ENCODE measurements at regions of chr19 and their contacts with region 1.

Region 1: DNA sequence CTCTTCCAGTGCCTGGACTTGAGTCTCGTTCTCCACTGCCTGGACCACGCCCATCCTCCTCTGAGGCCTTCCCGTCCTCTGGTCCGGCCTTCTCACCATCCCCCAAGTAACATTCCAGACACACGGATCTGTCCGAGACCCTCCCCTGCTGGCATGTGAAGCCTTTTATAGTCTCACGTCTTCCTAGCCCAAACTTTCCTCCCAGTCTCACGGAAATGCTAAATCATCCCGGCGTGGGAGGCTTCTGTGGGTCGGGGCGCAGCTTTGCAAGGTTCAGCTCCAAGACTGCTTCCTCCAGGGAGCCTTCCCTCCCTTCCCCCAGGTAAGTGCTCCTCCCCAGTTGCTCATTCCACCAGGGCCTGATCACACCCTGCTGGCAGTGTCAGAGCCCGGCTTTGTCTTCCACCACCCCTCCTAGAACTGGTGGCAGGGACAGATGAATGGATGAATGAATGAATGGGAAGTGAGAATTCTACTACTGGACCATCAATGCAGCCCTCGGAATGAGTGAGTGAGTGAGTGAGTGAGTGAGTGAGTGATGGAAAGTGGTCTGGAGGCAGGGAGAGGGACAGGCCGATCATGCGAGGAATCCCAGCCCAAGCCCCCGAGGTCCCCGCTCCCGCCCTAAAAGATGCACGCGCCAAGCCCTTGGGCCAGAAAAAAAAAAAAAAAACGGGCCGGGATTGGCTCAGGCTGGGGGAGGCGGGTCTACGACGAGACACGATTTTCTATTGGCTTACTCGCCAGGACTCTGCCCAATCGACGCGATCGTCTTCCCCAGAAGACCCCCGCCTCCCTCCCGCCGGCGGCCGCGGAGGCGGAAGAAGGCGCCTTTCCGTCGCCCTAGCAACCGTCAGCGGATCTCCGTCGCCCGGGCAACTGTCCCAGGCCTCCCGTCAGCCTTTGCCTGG is 9.3 kb downstream of the EPHX3 start:
- DNase-seq: peak; percentile 69
- ATAC-seq: peak; percentile 99
- H3K4me3 Mint-ChIP-seq: peak overlapping the region; percentile 89
- H3K27ac Mint-ChIP-seq: no peak overlapping the region
- H3K4me1 Mint-ChIP-seq: peaks cover 16% of the 10 kb centered on the region
- H3K27me3 Mint-ChIP-seq: peaks cover 9% of the 10 kb centered on the region
- CTCF ChIP-seq: no peak

Region 2: GRCh38 chr19:15125232-15126067 is 97.5 kb before region 1 on chr19:
- CTCF ChIA-PET with region 1: no interaction called
- POLR2A ChIA-PET with region 1: no interaction called
- intact Hi-C with region 1: loop called (anchors 1 kb)
- DNase-seq: peak; percentile 96
- ATAC-seq: peak; percentile 88
- H3K4me3 Mint-ChIP-seq: peak overlapping the region; percentile 95
- H3K27ac Mint-ChIP-seq: peak overlapping the region; percentile 91
- H3K4me1 Mint-ChIP-seq: peaks cover 17% of the 10 kb centered on the region
- H3K27me3 Mint-ChIP-seq: peaks cover 4% of the 10 kb centered on the region
- CTCF ChIP-seq: no peak

Region 3: GRCh38 chr19:15136246-15136954 is 86.6 kb before region 1 on chr19:
- CTCF ChIA-PET with region 1: no interaction called
- POLR2A ChIA-PET with region 1: no interaction called
- intact Hi-C with region 1: no loop called
- DNase-seq: no peak
- ATAC-seq: no peak
- H3K4me3 Mint-ChIP-seq: no peak overlapping the region
- H3K27ac Mint-ChIP-seq: no peak overlapping the region
- H3K4me1 Mint-ChIP-seq: no peaks in the 10 kb centered on the region
- H3K27me3 Mint-ChIP-seq: peaks cover 18% of the 10 kb centered on the region
- CTCF ChIP-seq: no peak

Region 4: DNA sequence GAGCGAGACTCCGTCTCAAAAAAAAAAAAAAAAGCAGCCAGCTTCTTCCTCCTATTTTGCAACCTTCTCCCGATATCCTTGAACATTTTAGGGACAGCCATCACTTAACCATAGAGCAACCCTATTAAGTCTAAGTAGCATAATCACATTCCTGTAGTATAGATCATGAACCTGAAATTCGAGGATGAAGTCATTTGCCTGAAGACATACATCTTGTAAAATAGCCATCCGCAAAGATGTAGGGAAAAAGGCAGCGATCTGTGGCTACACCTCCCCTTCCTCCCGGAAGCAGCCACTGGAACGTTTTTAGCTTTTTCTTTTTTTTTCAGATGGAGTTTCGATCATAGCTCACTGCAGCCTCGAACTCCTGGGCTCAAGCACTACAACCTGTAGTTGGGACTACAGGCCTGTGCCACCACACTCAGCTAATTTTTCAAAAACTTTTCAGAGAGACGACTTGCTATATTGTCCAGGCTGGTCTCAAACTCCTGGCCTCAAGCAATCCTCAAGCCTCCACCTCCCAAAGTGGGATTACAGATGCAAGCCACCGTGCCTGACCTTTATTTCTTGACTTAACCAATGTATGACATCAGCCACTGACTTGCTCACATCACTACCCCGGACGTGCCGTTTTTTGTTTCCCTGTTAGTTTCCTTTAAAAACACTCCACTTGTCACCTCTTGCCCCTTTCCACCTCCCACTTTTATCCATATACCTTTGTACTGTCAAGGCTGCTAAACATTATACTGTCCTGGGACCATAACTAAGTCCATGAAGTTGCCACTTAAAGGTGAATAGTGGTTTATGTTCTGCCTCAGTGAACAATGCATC is 11.3 kb after region 1 on chr19:
- CTCF ChIA-PET with region 1: no interaction called
- POLR2A ChIA-PET with region 1: interaction called, 5 read pairs
- intact Hi-C with region 1: loop called (anchors 1 kb)
- DNase-seq: no peak
- ATAC-seq: no peak
- H3K4me3 Mint-ChIP-seq: no peak overlapping the region
- H3K27ac Mint-ChIP-seq: no peak overlapping the region
- H3K4me1 Mint-ChIP-seq: peaks cover 26% of the 10 kb centered on the region
- H3K27me3 Mint-ChIP-seq: peaks cover 8% of the 10 kb centered on the region
- CTCF ChIP-seq: no peak

Measured in activated B cell treated with CpG ODN at 0.5 μM for 24 hours (primary cell).